ENCODE measurements at regions of chr2 and their contacts with region 1.

Region 1: GRCh38 chr2:121530212-121530705 is 421 bp upstream of the RNU4ATAC start:
- DNase-seq: peak; percentile 90
- ATAC-seq: peak; percentile 83

Region 2: DNA sequence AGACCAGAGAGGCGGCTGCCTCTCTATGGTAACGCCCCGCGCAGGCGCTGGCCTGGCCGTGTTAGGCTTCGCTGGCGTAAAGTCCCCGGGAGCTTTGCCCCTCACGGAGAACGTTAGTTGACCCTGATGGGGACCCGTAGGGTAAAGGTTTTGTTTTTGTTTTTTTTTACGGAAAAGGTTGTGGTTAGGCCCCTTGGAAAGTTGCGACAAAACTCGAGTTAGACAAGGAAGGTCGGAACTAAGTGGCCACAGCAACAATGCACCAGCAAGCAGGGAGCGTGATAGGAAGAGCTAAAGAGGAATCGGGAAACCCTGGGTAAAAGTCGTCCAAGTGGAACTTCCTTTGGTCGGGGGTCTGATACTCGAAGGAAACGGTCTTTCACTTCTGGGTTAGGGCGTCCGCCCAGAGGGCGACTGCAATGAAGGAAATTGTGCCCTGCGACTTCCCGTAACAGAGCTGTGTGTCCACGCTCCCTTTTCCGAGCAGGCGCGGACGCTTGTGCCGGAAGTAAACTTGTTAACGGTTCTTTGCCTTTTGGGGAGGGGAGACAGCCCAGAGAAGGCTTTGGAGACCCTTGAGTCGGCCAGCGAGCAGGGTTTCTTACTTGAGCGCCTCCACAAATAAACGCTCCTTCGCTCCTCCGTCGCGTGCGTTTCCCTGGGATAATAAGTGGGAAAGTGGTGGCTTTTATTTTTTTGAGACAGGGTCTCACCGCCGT is 119.5 kb after region 1 on chr2:
- intact Hi-C with region 1: loop called (anchors 5 kb)
- DNase-seq: peak; percentile 98
- ATAC-seq: peak; percentile 97

Region 3: DNA sequence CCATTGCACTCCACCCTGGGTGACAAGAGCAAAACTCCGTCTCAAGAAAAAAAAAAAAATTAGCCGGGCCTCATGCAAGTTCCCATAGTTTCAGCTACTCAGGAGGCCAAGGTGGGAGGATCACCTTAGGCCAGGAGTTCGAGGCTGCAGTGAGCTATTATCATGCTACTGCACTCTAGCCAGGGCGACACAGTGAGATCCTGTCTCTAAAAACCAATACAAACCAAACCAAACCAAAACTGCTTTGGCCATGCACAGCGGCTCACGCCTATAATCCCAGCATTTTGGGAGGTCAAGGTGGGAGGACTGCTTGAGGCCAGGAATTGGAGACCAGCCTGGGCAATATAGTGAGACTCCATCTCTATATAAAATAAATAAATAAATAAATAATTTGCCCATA is 187.3 kb after region 1 on chr2:
- intact Hi-C with region 1: loop called (anchors 5 kb)
- DNase-seq: no peak
- ATAC-seq: no peak